Mammary epithelial cell (primary cell): ENCODE measurements at regions of chr5 and their contacts with region 1.

Region 1: GRCh38 chr5:164470312-164470711 is 964.9 kb downstream of the MAT2B start:
- DNase-seq: no peak
- H3K4me3 ChIP-seq: no peak overlapping the region
- H3K27ac ChIP-seq: no peak overlapping the region
- H3K4me1 ChIP-seq: no peaks in the 10 kb centered on the region
- H3K27me3 ChIP-seq: no peaks in the 10 kb centered on the region
- CTCF ChIP-seq: no peak

Region 2: GRCh38 chr5:163706053-163706771 is 764.1 kb before region 1 on chr5:
- CTCF ChIA-PET with region 1: no interaction called
- dilution Hi-C with region 1: no loop called
- in situ Hi-C with region 1: loop called in 1 of 2 experiments (anchors 25 kb)
- intact Hi-C with region 1: no loop called
- DNase-seq: no peak
- H3K4me3 ChIP-seq: no peak overlapping the region
- H3K27ac ChIP-seq: no peak overlapping the region
- H3K4me1 ChIP-seq: peaks cover 8% of the 10 kb centered on the region
- H3K27me3 ChIP-seq: no peaks in the 10 kb centered on the region
- CTCF ChIP-seq: no peak